ENCODE measurements at regions of chr7 and their contacts with region 1.

Region 1: GRCh38 chr7:80453699-80454340 is 58.0 kb downstream of the GNAT3 start:
- DNase-seq: no peak
- H3K4me3 ChIP-seq: no peak overlapping the region
- H3K27ac ChIP-seq: no peak overlapping the region
- H3K4me1 ChIP-seq: no peaks in the 10 kb centered on the region
- H3K27me3 ChIP-seq: no peaks in the 10 kb centered on the region
- CTCF ChIP-seq: peak in 1 of 3 donors; percentile 13
- EP300 ChIP-seq: no peak
- POLR2A ChIP-seq: no peak

Region 2: DNA sequence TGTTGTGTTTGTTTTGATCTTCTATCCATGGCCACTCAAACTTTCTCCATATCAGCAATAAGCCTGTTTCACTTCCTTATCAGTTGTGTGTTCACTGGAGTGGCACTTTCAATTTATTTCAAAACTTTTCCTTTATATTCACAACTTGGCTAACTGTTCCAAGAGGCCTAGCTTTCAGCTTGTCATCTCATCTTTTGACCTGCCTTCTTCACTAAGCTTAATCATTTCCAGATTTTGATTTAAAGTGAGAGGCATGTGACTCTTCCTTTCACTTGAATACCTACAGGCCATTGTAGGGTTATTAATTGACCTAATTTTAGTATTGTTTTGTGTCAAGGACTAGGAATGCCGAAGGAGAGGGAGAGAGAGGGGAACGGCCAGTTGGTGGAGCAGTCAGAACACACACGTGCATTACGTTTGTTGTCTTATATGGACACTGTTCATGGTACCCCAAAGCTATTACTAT is 63.5 kb after region 1 on chr7:
- intact Hi-C with region 1: loop called in 1 of 4 experiments (anchors 10 kb)
- DNase-seq: no peak
- H3K4me3 ChIP-seq: no peak overlapping the region
- H3K27ac ChIP-seq: no peak overlapping the region
- H3K4me1 ChIP-seq: peaks cover 1% of the 10 kb centered on the region
- H3K27me3 ChIP-seq: no peaks in the 10 kb centered on the region
- CTCF ChIP-seq: no peak
- EP300 ChIP-seq: no peak
- POLR2A ChIP-seq: no peak

Region 3: DNA sequence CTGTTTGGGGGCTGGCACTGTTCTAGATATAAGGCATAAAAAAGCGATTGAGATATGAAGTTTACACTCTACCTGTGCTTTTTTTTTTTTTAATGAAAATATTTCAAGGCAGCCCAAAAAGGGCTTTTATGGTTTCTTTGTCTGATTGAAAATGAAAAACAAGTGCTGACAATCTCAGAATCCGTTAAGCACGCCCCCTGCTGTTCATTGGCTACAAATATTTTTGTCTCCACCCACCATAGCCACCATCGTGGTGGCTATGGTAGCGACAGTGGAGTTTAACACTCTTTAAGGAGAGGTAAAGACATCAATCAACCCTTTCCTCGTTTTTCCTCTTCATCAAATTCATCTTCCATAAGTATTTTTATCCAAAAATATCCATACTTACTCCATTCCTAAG is 278.8 kb after region 1 on chr7:
- intact Hi-C with region 1: no loop called
- DNase-seq: no peak
- H3K4me3 ChIP-seq: no peak overlapping the region
- H3K27ac ChIP-seq: no peak overlapping the region
- H3K4me1 ChIP-seq: peaks cover 8% of the 10 kb centered on the region
- H3K27me3 ChIP-seq: no peaks in the 10 kb centered on the region
- CTCF ChIP-seq: no peak
- EP300 ChIP-seq: no peak
- POLR2A ChIP-seq: no peak